ENCODE measurements at regions of chr1 and their contacts with region 1.

Region 1: DNA sequence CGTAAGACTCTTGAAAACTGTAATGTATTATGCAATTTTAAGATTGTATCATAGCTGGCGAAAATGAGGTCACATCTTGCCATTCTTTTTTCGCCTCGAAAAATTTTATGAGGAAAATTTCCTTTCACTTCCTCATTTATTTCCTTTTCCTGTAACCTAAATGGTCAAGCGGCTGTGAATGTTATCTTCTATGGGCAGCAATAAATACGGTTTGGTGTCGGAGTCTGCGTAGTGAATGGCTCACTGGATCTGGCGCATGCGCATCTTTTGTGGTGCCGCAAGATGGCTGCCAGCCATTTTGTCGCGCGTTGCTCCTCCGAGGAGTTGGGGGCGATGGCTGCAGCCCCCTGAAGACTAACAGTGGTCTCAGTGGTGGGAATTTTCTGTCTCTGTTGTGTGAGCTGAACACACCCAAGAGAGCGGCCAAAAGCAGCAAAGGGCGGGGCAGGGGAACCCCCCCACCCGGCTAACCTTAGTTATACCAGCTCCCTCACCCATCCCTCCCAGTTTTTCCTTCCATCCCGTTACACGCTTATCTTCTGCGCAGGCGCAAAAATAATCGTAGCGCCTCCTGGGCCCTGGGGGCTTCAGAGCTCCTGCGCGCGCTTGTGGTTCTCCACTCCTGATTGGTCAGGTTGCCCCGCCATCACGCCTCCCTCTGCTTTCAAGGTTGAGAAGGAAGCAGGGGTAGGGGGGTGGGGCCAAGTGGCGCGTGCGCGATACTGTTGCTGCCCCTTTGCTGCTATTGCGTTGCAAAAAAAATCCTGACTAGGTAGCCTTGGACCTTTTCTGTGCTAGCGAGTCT is at the start of gene RPRD2:
- DNase-seq: peak; percentile 83 to 100 (median 99)
- ATAC-seq: peak; percentile 97
- H3K4me3 ChIP-seq: peak within 1 kb of the TSS; percentile 99
- H3K4me3 Mint-ChIP-seq: peak within 1 kb of the TSS; percentile 86 to 100 (median 98)
- H3K27ac ChIP-seq: peak within 1 kb of the TSS; percentile 84
- H3K27ac Mint-ChIP-seq: peak within 1 kb of the TSS; percentile 95 to 100 (median 98)
- H3K4me1 ChIP-seq: peaks cover 10% of the 10 kb centered on the region in 2 donors
- H3K4me1 Mint-ChIP-seq: peaks cover 25 to 37% (median 32%) of the 10 kb centered on the region in 7 donors
- H3K27me3 ChIP-seq: no peaks in the 10 kb centered on the region
- H3K27me3 Mint-ChIP-seq: peaks cover 0 to 2% (median 0%) of the 10 kb centered on the region in 5 donors
- total RNA-seq, gene RPRD2: 33.2 to 62.2 (median 40.6) TPM

Region 2: GRCh38 chr1:150149271-150150132 is 214.1 kb before region 1 on chr1 and contains the start of gene PLEKHO1:
- CTCF ChIA-PET with region 1: no interaction called
- POLR2A ChIA-PET with region 1: no interaction called
- intact Hi-C with region 1: loop called in 1 of 2 experiments (anchors 2 kb)
- DNase-seq: peak; percentile 53 to 84 (median 65)
- ATAC-seq: peak; percentile 86
- H3K4me3 ChIP-seq: peak within 1 kb of the TSS; percentile 89
- H3K4me3 Mint-ChIP-seq: peak within 1 kb of the TSS; percentile 89 to 99 (median 96)
- H3K27ac ChIP-seq: peak within 1 kb of the TSS; percentile 77
- H3K27ac Mint-ChIP-seq: peak within 1 kb of the TSS; percentile 87 to 99 (median 97)
- H3K4me1 ChIP-seq: peaks cover 21 to 38% of the 10 kb centered on the region in 2 donors
- H3K4me1 Mint-ChIP-seq: peaks cover 42 to 79% (median 74%) of the 10 kb centered on the region in 7 donors
- H3K27me3 ChIP-seq: no peaks in the 10 kb centered on the region
- H3K27me3 Mint-ChIP-seq: peaks cover 0 to 26% (median 0%) of the 10 kb centered on the region in 5 donors
- total RNA-seq, gene PLEKHO1: 64.9 to 111 (median 94.1) TPM

Region 3: DNA sequence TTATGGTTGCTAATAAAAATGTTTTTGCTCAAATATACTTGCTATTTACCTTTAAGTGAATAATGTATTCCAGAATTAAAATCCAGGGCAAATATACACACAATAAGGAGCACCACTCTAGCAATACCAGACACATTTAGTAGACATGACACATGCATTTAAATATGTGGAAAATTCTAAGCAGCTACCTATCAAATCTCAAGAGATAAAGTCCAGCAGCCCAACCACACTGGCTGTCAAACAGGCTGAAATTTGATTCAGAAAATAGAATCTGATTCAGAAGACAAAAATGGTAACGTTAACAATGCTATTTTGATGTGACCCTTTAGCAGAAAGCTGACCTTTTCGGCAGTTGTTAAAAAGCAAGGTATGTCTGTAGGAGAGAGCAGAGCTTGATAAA is 171.6 kb before region 1 on chr1:
- CTCF ChIA-PET with region 1: no interaction called
- POLR2A ChIA-PET with region 1: no interaction called
- intact Hi-C with region 1: no loop called
- DNase-seq: no peak
- ATAC-seq: no peak
- H3K4me3 ChIP-seq: no peak overlapping the region
- H3K4me3 Mint-ChIP-seq: no peak overlapping the region
- H3K27ac ChIP-seq: no peak overlapping the region
- H3K27ac Mint-ChIP-seq: no peak overlapping the region
- H3K4me1 ChIP-seq: peaks cover 0 to 1% of the 10 kb centered on the region in 2 donors
- H3K4me1 Mint-ChIP-seq: peaks cover 5 to 7% (median 6%) of the 10 kb centered on the region in 7 donors
- H3K27me3 ChIP-seq: no peaks in the 10 kb centered on the region
- H3K27me3 Mint-ChIP-seq: peaks cover 0 to 7% (median 3%) of the 10 kb centered on the region in 5 donors

Region 4: DNA sequence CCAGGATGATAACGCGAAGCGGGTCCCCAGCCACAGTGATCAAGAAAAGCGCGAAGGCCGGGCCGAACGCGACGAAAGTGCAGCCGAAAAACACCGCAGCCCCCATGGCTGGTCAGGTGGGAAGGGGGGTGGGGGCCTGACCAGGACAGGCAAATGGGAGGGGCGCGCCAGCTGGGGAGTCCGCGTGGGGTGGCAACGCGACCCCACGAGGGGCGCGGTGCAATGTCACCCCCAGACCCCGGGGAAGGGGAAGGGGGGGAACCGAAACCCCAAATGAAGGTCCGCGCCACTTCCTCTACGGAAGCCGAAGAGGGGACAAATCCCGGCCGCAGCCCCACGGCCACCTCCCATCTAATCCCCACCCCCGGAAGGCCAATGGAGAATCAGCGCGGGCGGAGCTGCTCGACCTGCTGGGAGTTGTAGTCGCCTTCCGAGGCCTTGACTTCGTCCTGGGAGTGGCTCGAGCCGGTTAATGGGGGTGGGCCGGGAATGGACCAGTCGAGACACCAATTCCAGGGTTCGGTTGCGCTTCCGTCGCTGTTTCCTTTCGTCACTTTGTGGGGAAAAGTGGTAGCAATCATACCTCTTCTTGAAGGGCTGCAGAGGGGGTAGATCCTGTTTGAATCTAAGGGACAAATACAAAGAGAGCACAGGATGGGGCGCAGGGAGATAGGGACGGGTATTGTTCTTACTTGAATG is 94.8 kb before region 1 on chr1 and contains the start of gene APH1A:
- CTCF ChIA-PET with region 1: no interaction called
- POLR2A ChIA-PET with region 1: interaction called, 9 read pairs
- intact Hi-C with region 1: loop called (anchors 1 to 2 kb)
- DNase-seq: peak; percentile 69 to 92 (median 89)
- ATAC-seq: peak; percentile 97
- H3K4me3 ChIP-seq: peak within 1 kb of the TSS; percentile 87
- H3K4me3 Mint-ChIP-seq: peak within 1 kb of the TSS; percentile 94 to 99 (median 96)
- H3K27ac ChIP-seq: peak within 1 kb of the TSS; percentile 97
- H3K27ac Mint-ChIP-seq: peak within 1 kb of the TSS; percentile 88 to 99 (median 94)
- H3K4me1 ChIP-seq: peaks cover 13 to 20% of the 10 kb centered on the region in 2 donors
- H3K4me1 Mint-ChIP-seq: peaks cover 25 to 39% (median 30%) of the 10 kb centered on the region in 7 donors
- H3K27me3 ChIP-seq: no peaks in the 10 kb centered on the region
- H3K27me3 Mint-ChIP-seq: no peaks in the 10 kb centered on the region
- total RNA-seq, gene APH1A: 112 to 143 (median 127) TPM

Region 5: GRCh38 chr1:150321826-150322166 is 41.8 kb before region 1 on chr1:
- CTCF ChIA-PET with region 1: no interaction called
- POLR2A ChIA-PET with region 1: interaction called, 42 read pairs
- intact Hi-C with region 1: loop called (anchors 1 kb)
- DNase-seq: peak in 5 of 9 donors; percentile 3 to 21 (median 14)
- ATAC-seq: peak; percentile 9
- H3K4me3 ChIP-seq: peak overlapping the region; percentile 97
- H3K4me3 Mint-ChIP-seq: peak overlapping the region; percentile 95 to 100 (median 99)
- H3K27ac ChIP-seq: peak overlapping the region; percentile 76
- H3K27ac Mint-ChIP-seq: peak overlapping the region; percentile 95 to 100 (median 99)
- H3K4me1 ChIP-seq: peaks cover 14 to 16% of the 10 kb centered on the region in 2 donors
- H3K4me1 Mint-ChIP-seq: peaks cover 10 to 54% (median 41%) of the 10 kb centered on the region in 7 donors
- H3K27me3 ChIP-seq: no peaks in the 10 kb centered on the region
- H3K27me3 Mint-ChIP-seq: peaks cover 0 to 2% (median 0%) of the 10 kb centered on the region in 5 donors

Region 6: GRCh38 chr1:150486964-150487762 is 123.5 kb after region 1 on chr1 and contains the start of gene TARS2:
- CTCF ChIA-PET with region 1: no interaction called
- POLR2A ChIA-PET with region 1: interaction called, 20 read pairs
- intact Hi-C with region 1: loop called (anchors 1 kb)
- DNase-seq: peak; percentile 71 to 97 (median 95)
- ATAC-seq: peak; percentile 100
- H3K4me3 ChIP-seq: peak within 1 kb of the TSS; percentile 95
- H3K4me3 Mint-ChIP-seq: peak within 1 kb of the TSS; percentile 91 to 100 (median 96)
- H3K27ac ChIP-seq: peak within 1 kb of the TSS; percentile 83
- H3K27ac Mint-ChIP-seq: peak within 1 kb of the TSS; percentile 92 to 100 (median 99)
- H3K4me1 ChIP-seq: peaks cover 4 to 8% of the 10 kb centered on the region in 2 donors
- H3K4me1 Mint-ChIP-seq: peaks cover 5 to 28% (median 20%) of the 10 kb centered on the region in 7 donors
- H3K27me3 ChIP-seq: no peaks in the 10 kb centered on the region
- H3K27me3 Mint-ChIP-seq: no peaks in the 10 kb centered on the region
- total RNA-seq, gene TARS2: 30.3 to 39.0 (median 36.4) TPM

Region 7: GRCh38 chr1:150876119-150876454 is 512.5 kb after region 1 on chr1:
- CTCF ChIA-PET with region 1: no interaction called
- POLR2A ChIA-PET with region 1: no interaction called
- intact Hi-C with region 1: loop called in 1 of 2 experiments (anchors 1 kb)
- DNase-seq: no peak
- ATAC-seq: peak; percentile 50
- H3K4me3 ChIP-seq: peak overlapping the region; percentile 68
- H3K4me3 Mint-ChIP-seq: peak overlapping the region; percentile 87 to 96 (median 95)
- H3K27ac ChIP-seq: peak overlapping the region; percentile 83
- H3K27ac Mint-ChIP-seq: peak overlapping the region; percentile 89 to 97 (median 94)
- H3K4me1 ChIP-seq: peaks cover 0 to 19% of the 10 kb centered on the region in 2 donors
- H3K4me1 Mint-ChIP-seq: peaks cover 13 to 45% (median 37%) of the 10 kb centered on the region in 7 donors
- H3K27me3 ChIP-seq: no peaks in the 10 kb centered on the region
- H3K27me3 Mint-ChIP-seq: no peaks in the 10 kb centered on the region

Measured in naive thymus-derived CD4-positive, alpha-beta T cell (primary cell).